GM10248 (cell line): ENCODE measurements at regions of chr3 and their contacts with region 1.

Region 1: DNA sequence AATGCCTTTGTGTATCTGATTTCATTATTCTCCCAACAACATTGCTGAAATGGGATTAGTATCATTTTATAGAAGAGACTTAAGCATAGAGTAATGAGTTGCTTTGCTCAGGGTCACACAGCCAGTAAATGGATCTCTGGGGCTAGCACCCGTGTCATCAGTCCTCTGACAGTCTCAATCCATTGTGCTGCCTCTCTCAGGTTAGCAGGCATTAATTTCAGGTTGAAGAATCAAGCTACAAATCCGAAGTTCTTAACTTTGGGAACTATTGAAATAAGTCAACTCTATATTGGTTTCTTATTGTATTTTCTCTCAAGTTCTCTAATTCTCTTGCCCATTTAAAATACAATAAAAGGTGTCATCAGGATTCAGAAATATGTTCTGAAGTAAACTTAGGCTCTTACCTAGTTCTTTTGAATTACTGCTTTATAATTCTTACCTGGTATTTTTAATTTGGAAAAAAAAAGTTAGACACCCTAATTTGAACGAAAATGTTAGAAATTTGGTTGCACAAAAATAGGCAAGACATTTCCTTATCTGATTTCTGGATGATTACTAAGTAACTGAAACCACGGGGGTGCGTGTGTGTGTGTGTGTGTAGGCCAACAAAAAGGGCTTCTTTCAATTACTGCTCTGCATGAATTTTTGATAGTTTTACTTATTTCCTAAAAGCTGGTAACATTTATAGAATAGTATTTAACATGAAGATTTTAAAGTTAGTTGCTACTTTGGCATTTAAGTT is 189.8 kb downstream of the MBNL1 start:
- DNase-seq: no peak
- CTCF ChIP-seq: no peak

Region 2: DNA sequence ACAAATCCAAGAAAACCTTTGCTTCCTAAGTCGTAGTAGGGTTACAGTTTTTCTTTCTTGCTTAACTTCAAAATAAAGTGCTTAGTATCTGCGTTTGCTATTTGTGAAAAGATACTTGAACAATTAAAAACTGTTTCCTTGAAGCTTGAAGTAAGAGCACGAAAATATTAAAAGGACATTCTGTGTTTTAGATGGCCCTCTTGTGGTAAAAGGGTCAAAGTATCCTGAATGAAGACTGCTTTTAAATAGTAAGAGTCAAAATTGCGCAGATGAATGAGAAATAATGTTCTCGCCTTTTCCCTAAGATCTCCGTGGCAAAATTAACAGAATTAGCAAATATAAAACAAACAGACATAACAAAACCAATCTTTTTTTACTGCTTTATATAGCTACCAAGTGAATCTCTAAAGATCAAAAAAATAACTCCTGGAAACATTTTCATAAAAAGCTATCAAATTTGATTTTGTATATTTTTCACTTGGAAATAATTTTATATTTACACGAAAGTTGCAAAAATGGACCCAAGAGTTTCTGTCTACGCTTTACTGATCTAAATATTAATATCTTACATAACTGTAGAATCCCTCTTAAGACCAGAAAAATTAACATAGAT is 14.4 kb before region 1 on chr3:
- CTCF ChIA-PET with region 1: interaction called, 25 read pairs
- POLR2A ChIA-PET with region 1: no interaction called
- DNase-seq: peak; percentile 17
- CTCF ChIP-seq: peak; percentile 60

Region 3: DNA sequence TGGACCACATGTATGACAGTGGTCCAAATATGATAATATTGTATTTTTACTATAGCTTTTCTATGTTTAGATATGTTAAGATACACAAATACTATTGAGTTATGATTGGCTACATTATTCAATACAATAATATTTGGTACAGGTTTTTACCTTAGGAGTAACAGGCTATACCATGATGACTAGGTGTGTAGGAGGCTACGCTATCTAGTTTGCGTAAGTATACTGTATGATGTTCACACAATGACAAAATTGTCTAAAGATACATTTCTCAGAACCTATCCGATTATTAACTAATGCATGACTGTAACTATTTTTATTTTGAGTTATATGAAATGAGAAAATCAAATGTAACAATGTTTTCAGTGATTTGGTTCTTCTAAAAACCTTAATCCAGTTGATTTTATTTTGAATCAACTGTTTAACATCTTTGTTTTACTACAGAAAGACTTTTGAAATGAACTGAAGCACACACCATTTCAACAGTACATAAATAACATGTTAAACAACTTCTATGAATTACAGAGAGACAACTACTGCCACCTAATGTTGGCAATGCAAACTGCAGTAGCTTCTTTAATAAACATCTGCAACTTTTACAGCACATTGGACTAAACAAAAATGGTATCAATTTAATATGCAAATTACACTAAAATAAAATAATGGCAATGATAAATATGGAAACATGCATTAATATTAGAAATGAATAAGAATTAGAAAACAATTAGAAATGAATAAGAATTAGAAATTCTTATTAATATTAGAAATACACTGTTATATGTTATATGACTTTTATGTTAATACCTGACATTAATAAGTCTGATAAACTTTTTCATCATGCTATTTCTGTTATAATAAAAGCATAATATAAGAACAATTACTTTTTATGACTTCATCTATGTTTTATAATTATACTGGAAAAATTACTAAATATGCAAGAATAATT is 65.9 kb after region 1 on chr3:
- CTCF ChIA-PET with region 1: no interaction called
- POLR2A ChIA-PET with region 1: no interaction called
- DNase-seq: no peak
- CTCF ChIP-seq: peak; percentile 80